ENCODE measurements at regions of chr19 and their contacts with region 1.

Region 1: DNA sequence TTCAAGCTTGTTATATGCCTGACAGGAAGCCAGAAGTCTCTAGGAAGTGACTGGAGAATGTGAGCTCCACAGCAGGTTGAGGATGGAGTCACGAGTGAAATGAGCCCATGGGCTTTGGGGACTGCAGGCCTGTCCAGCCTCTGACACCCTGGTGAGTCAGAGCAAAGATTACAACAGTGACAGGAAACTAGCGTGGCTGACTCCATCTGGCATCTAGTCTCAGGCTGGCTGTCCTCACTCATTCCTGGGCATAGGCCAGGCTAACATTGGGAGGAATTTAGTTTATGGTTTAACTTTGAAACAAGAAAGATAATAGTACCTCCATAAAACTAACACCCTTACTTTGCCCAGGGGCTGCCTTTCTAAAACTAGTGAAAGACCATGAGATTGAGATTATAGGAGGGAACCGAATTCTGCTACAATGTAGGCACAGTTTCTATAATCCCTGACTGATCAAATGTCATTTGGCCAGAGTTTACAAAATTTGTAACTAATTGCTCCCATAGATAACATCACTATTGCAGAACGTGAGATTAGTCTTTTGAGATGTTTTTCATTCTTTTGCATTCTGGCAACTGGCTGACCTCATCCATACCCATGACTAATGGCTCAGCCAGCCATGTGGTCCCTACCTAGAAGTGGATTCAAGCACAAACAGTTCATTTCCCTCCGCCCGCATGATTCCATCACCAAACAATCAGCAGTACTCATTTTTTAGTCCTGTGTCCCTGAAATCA is 28.4 kb downstream of the PSG1 start:
- DNase-seq: peak; percentile 98
- ATAC-seq: peak; percentile 95
- H3K4me3 ChIP-seq: no peak overlapping the region
- H3K27ac ChIP-seq: peak overlapping the region; percentile 89
- H3K4me1 ChIP-seq: peaks cover 23% of the 10 kb centered on the region
- H3K27me3 ChIP-seq: no peaks in the 10 kb centered on the region
- CTCF ChIP-seq: no peak
- POLR2A ChIP-seq: 0 out of 2 replicates have a peak, but pooled peaks have one; percentile 49
- RAD21 ChIP-seq: no peak

Region 2: GRCh38 chr19:42816894-42817293 is 34.3 kb before region 1 on chr19:
- CTCF ChIA-PET with region 1: no interaction called
- POLR2A ChIA-PET with region 1: no interaction called
- dilution Hi-C with region 1: no loop called
- in situ Hi-C with region 1: no loop called
- intact Hi-C with region 1: loop called (anchors 1 kb)
- DNase-seq: peak; percentile 31
- ATAC-seq: peak; percentile 76
- H3K4me3 ChIP-seq: no peak overlapping the region
- H3K27ac ChIP-seq: no peak overlapping the region
- H3K4me1 ChIP-seq: peaks cover 8% of the 10 kb centered on the region
- H3K27me3 ChIP-seq: no peaks in the 10 kb centered on the region
- CTCF ChIP-seq: no peak
- POLR2A ChIP-seq: no peak
- RAD21 ChIP-seq: no peak

Region 3: DNA sequence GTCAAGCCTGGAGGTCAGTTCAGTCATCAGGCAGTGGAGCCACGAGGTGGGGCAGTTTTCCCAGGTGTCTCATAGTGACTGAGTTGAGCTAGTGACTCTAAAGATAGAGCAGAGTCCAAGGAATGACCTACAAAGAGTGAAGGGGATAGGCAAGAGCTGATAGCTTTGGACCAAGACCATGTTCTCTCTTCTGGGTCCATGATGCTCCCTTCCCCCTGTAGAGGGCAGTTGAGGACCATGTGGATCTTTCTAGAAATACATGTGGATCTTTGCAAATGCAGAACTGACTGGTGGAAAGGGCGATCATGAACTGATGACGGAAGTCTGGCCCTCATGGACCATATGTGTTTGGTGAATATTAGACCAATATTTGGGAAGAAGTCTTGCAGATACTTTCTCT is 21.4 kb after region 1 on chr19:
- CTCF ChIA-PET with region 1: no interaction called
- POLR2A ChIA-PET with region 1: no interaction called
- dilution Hi-C with region 1: no loop called
- in situ Hi-C with region 1: no loop called
- intact Hi-C with region 1: loop called (anchors 1 kb)
- DNase-seq: no peak
- ATAC-seq: no peak
- H3K4me3 ChIP-seq: no peak overlapping the region
- H3K27ac ChIP-seq: no peak overlapping the region
- H3K4me1 ChIP-seq: peaks cover 17% of the 10 kb centered on the region
- H3K27me3 ChIP-seq: no peaks in the 10 kb centered on the region
- CTCF ChIP-seq: no peak
- POLR2A ChIP-seq: no peak
- RAD21 ChIP-seq: no peak

Region 4: GRCh38 chr19:42926781-42927180 is 75.6 kb after region 1 on chr19:
- CTCF ChIA-PET with region 1: no interaction called
- POLR2A ChIA-PET with region 1: no interaction called
- dilution Hi-C with region 1: no loop called
- in situ Hi-C with region 1: no loop called
- intact Hi-C with region 1: no loop called
- DNase-seq: no peak
- ATAC-seq: no peak
- H3K4me3 ChIP-seq: no peak overlapping the region
- H3K27ac ChIP-seq: no peak overlapping the region
- H3K4me1 ChIP-seq: peaks cover 2% of the 10 kb centered on the region; the same call in 1 of the 2 replicates
- H3K27me3 ChIP-seq: no peaks in the 10 kb centered on the region
- CTCF ChIP-seq: no peak
- POLR2A ChIP-seq: no peak
- RAD21 ChIP-seq: no peak

Measured in IMR-90 (cell line).